ENCODE measurements at regions of chr2 and their contacts with region 1.

Region 1: DNA sequence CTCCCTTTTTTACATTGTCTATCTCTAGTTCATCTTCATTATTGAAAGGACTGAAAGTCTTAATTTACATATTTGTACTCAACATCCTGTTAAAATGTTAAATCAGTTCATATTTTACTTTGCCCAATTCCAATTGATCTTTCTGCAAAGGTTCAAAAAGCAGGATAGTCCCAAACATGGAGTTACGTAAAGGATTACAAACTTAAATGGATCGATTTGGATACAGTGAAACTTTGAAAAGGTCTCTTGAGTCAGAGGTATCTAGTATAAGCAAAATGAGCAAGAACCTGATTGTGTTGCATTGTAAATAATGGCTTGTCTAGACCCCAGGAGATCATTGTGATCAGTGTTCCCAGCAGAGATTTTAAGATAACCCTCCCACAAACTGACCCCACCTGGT is 4.1 kb downstream of the DAPL1 start:
- DNase-seq: no peak
- ATAC-seq: no peak
- H3K4me3 ChIP-seq: no peak overlapping the region
- H3K27ac ChIP-seq: no peak overlapping the region
- H3K4me1 ChIP-seq: no peaks in the 10 kb centered on the region
- H3K27me3 ChIP-seq: peaks cover 29% of the 10 kb centered on the region
- CTCF ChIP-seq: no peak

Region 2: DNA sequence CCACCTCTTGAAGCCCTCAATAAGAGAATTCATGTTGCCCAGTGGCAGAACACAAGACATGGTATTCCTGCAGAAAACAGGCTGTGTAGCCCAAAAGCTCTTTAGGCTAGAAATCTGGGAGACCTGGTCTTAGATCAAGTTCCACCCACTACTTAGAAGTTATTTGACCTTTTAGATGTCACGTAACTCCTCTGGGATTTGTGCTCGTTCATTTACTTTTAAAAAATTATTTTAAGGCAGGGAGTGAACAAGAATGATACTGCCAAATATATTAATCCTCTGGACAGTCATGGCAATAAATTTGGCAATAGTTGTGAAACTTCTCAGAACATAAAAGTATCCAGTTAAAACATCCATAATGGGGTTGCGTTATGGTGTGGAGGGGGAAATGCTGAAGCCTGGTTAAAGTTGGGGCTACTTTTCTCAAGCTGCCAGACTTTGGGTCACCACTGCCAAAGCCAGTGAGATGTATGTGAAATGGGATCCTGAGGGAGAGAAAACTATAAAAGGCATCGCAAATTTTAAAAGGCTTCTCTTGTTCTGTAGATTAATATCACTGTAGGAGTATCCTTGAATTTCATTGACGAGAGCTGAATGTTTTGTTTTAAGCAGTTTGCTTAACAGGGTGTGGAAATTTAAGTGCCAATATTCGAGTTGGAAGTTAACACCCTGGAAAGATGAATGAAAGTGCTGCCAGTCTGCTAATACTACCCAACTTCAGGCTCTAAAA is 11.7 kb after region 1 on chr2:
- CTCF ChIA-PET with region 1: no interaction called
- POLR2A ChIA-PET with region 1: interaction called, 11 read pairs
- in situ Hi-C with region 1: no loop called
- intact Hi-C with region 1: no loop called
- DNase-seq: no peak
- ATAC-seq: no peak
- H3K4me3 ChIP-seq: no peak overlapping the region
- H3K27ac ChIP-seq: no peak overlapping the region
- H3K4me1 ChIP-seq: no peaks in the 10 kb centered on the region
- H3K27me3 ChIP-seq: peaks cover 42% of the 10 kb centered on the region
- CTCF ChIP-seq: no peak